IMR-90 (cell line): ENCODE measurements at regions of chr6 and their contacts with region 1.

Region 1: GRCh38 chr6:32763427-32763826 is at the start of gene HLA-DQB2:
- DNase-seq: no peak
- ATAC-seq: no peak
- H3K4me3 ChIP-seq: no peak within 1 kb of the TSS
- H3K27ac ChIP-seq: no peak within 1 kb of the TSS
- H3K4me1 ChIP-seq: no peaks in the 10 kb centered on the region
- H3K27me3 ChIP-seq: peaks cover 4% of the 10 kb centered on the region
- CTCF ChIP-seq: no peak
- POLR2A ChIP-seq: no peak
- RAD21 ChIP-seq: no peak
- total RNA-seq, gene HLA-DQB2: not detected in 2 replicates

Region 2: GRCh38 chr6:31971993-31972708 is 791.3 kb before region 1 on chr6 and contains the start of gene DXO:
- CTCF ChIA-PET with region 1: no interaction called
- POLR2A ChIA-PET with region 1: no interaction called
- dilution Hi-C with region 1: no loop called
- in situ Hi-C with region 1: no loop called
- intact Hi-C with region 1: no loop called
- DNase-seq: peak; percentile 99
- ATAC-seq: peak; percentile 91
- H3K4me3 ChIP-seq: peak within 1 kb of the TSS; percentile 60
- H3K27ac ChIP-seq: peak within 1 kb of the TSS; percentile 93
- H3K4me1 ChIP-seq: peaks cover 11% of the 10 kb centered on the region
- H3K27me3 ChIP-seq: no peaks in the 10 kb centered on the region
- CTCF ChIP-seq: no peak
- POLR2A ChIP-seq: peak; percentile 71
- RAD21 ChIP-seq: 0 out of 2 replicates have a peak, but pooled peaks have one; percentile 1
- total RNA-seq, gene DXO: 7.8 and 9.3 TPM in 2 replicates

Region 3: DNA sequence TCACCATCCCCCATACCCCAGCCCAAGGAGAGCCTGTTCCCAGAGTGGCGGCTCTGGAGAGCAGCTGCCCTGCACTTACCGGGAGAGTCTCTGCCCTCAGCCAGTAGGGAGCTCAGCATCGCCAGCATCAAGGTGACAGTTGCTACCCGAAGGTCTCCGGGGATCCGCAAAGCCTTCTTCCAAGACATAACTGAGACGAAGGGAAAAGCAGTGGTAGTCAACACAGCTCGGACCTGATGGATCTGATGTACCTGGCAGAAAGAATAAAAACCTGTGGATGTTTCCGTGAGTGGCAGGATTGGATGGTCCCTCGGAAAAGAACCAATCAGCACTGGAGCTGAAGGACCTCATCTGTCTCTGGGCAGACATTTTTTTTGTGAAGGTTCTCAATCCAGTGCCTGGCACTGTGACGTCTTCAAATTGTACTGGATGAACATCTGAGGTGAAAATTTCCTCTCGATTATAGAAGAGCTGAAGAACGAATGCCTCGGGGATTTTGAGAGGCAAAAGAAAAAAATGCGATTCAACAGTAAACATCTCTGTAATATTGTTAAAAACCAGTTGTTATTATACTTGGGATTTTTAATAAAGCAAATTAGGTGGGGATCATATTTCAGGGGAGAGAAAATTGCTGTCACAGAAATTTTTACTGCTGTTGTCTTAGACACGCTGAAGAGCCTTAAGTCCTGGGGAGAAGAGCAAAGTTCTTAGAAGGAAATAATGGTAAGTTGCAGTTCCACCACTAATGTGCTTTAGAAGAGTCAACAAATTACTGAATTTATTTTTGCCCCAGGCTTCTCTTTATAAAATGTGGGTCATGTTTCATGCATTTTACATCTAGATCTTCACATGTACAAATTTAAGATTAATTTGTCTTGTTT is 96.8 kb before region 1 on chr6 and contains the start of gene HLA-DQB1:
- CTCF ChIA-PET with region 1: no interaction called
- POLR2A ChIA-PET with region 1: no interaction called
- dilution Hi-C with region 1: no loop called
- in situ Hi-C with region 1: loop called (anchors 5 kb)
- intact Hi-C with region 1: no loop called
- DNase-seq: no peak
- ATAC-seq: no peak
- H3K4me3 ChIP-seq: no peak within 1 kb of the TSS
- H3K27ac ChIP-seq: no peak within 1 kb of the TSS
- H3K4me1 ChIP-seq: no peaks in the 10 kb centered on the region
- H3K27me3 ChIP-seq: no peaks in the 10 kb centered on the region
- CTCF ChIP-seq: no peak
- POLR2A ChIP-seq: no peak
- RAD21 ChIP-seq: no peak
- total RNA-seq, gene HLA-DQB1: not detected in 2 replicates